ENCODE measurements at regions of chr3 and their contacts with region 1.

Region 1: DNA sequence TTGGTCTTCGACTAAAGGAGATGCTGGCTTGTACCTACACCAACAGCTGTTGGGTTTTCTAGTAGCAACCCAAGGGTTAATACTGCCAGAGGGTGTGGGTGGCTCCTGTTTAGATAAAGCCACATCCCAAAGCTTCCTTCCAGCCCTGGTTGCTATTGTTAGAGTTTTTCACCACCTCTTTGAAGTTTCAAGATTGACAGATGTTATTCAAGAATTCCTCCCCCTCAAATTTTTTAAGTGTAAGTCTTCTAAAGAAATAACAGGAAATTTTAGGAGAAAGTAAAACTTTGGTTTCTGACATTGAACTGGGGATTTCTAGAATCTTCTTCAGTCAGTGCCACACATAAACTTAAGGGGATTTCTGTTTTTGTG is 60.9 kb downstream of the TGFBR2 start:
- DNase-seq: peak in 6 of 9 donors; percentile 60 to 71 (median 66)
- ATAC-seq: peak; percentile 59
- H3K4me3 ChIP-seq: no peak overlapping the region
- H3K4me3 Mint-ChIP-seq: peak overlapping the region; percentile 16 to 88 (median 62)
- H3K27ac ChIP-seq: peak overlapping the region; percentile 72
- H3K27ac Mint-ChIP-seq: peak overlapping the region; percentile 82 to 99 (median 94)
- H3K4me1 ChIP-seq: peaks cover 46 to 95% of the 10 kb centered on the region in 2 donors
- H3K4me1 Mint-ChIP-seq: peaks cover 64 to 100% (median 99%) of the 10 kb centered on the region in 7 donors
- H3K27me3 ChIP-seq: no peaks in the 10 kb centered on the region
- H3K27me3 Mint-ChIP-seq: no peaks in the 10 kb centered on the region

Region 2: DNA sequence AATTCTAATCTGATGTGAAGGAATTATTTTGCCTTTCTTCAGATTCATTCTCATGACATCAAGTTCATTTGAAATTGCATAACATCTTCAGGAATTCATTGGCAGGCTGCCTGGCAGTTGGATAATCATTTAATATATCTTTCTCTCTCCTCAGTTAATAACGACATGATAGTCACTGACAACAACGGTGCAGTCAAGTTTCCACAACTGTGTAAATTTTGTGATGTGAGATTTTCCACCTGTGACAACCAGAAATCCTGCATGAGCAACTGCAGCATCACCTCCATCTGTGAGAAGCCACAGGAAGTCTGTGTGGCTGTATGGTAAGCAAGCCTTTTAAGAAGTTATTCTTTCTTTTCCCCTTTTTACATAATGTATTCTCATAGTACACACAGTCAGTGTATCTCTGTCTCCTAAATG is 22.7 kb before region 1 on chr3:
- CTCF ChIA-PET with region 1: no interaction called
- POLR2A ChIA-PET with region 1: interaction called, 77 read pairs
- intact Hi-C with region 1: loop called in 1 of 2 experiments (anchors 1 kb)
- DNase-seq: peak in 7 of 9 donors; percentile 51 to 83 (median 71)
- ATAC-seq: peak; percentile 77
- H3K4me3 ChIP-seq: peak overlapping the region; percentile 23
- H3K4me3 Mint-ChIP-seq: peak overlapping the region; percentile 60 to 88 (median 77)
- H3K27ac ChIP-seq: peak overlapping the region; percentile 69
- H3K27ac Mint-ChIP-seq: peak overlapping the region; percentile 91 to 98 (median 95)
- H3K4me1 ChIP-seq: peaks cover 88 to 98% of the 10 kb centered on the region in 2 donors
- H3K4me1 Mint-ChIP-seq: peaks cover 80 to 99% (median 94%) of the 10 kb centered on the region in 7 donors
- H3K27me3 ChIP-seq: no peaks in the 10 kb centered on the region
- H3K27me3 Mint-ChIP-seq: no peaks in the 10 kb centered on the region

Region 3: DNA sequence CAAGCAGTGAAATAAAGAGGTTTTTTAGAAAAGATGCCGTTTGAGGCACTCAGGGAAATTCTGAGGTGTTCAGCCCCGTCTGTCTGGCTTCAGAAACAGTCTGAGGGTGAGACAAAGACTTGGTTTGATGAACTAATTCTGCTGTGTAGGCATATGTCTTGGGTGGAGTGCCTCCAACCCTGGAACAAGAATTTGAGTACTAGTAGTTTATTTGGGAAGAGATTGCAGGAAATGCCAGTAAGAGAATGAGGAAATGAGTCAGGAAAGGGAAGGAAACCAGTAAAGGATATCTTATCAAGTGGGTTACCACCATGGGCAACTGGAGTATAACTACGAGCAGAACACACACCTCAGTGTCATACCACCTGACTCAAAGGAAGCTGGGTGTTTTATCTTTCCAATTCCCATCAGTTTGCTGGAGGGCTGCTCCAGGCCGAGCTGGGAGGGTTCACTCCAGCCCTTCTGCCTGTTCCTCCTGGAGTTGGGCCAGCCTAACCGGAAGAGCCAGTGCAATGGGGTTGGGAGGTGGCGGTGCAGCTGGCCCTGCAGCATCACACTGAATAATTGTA is 14.5 kb after region 1 on chr3:
- CTCF ChIA-PET with region 1: interaction called, 5 read pairs
- POLR2A ChIA-PET with region 1: interaction called, 34 read pairs
- intact Hi-C with region 1: loop called (anchors 1 to 2 kb)
- DNase-seq: peak in 2 of 9 donors; percentile 25 to 26
- ATAC-seq: peak; percentile 51
- H3K4me3 ChIP-seq: no peak overlapping the region
- H3K4me3 Mint-ChIP-seq: peak overlapping the region; percentile 39 to 88 (median 78)
- H3K27ac ChIP-seq: peak overlapping the region; percentile 52
- H3K27ac Mint-ChIP-seq: peak overlapping the region; percentile 62 to 98 (median 93)
- H3K4me1 ChIP-seq: peaks cover 32 to 84% of the 10 kb centered on the region in 2 donors
- H3K4me1 Mint-ChIP-seq: peaks cover 61 to 100% (median 93%) of the 10 kb centered on the region in 7 donors
- H3K27me3 ChIP-seq: no peaks in the 10 kb centered on the region
- H3K27me3 Mint-ChIP-seq: no peaks in the 10 kb centered on the region

Region 4: DNA sequence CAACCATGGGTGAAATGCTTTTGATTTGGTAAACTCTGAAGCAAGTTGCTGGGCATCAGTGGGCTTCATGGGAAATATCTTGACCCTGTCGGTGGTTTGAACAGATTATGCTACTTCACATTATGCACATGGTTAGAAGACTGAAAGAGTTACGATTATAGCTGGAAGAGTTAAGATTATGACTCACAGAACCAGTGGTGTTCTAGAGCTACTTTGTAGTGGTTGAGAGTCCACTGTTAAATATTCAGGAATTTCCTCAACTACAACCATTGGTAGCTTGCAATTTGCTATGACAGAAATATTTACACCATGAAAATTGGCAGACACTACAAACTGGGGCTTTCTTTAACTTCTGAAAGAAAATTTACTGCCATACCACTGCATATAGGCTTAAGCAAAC is 127.9 kb after region 1 on chr3:
- CTCF ChIA-PET with region 1: no interaction called
- POLR2A ChIA-PET with region 1: no interaction called
- intact Hi-C with region 1: no loop called
- DNase-seq: no peak
- ATAC-seq: no peak
- H3K4me3 ChIP-seq: no peak overlapping the region
- H3K4me3 Mint-ChIP-seq: no peak overlapping the region
- H3K27ac ChIP-seq: no peak overlapping the region
- H3K27ac Mint-ChIP-seq: no peak overlapping the region
- H3K4me1 ChIP-seq: no peaks in the 10 kb centered on the region
- H3K4me1 Mint-ChIP-seq: peaks cover 0 to 1% (median 0%) of the 10 kb centered on the region in 7 donors
- H3K27me3 ChIP-seq: no peaks in the 10 kb centered on the region
- H3K27me3 Mint-ChIP-seq: peaks cover 0 to 7% (median 3%) of the 10 kb centered on the region in 5 donors

Region 5: DNA sequence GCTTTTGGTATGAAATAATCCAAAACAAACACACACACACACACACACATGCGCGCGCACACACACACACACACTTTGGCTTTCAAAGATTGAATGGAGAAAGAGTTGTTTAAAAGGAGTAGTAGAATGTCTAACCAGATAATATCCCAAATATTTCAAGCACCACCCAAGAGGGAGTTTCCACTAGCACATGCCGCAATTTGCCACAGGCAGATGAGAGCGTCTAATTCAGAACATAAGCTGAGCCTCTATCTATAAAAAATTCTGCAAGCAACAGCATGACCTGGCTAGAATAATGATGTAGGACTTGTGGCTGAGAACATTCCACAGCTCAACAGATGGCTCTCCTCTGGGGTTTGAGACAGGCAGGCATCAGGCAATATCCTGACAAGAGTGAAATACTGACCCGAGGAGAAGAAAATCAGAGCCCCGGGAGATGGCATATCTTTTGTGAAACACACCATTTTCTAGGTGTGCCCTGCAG is 529.7 kb after region 1 on chr3:
- CTCF ChIA-PET with region 1: no interaction called
- POLR2A ChIA-PET with region 1: no interaction called
- intact Hi-C with region 1: no loop called
- DNase-seq: no peak
- ATAC-seq: no peak
- H3K4me3 ChIP-seq: no peak overlapping the region
- H3K4me3 Mint-ChIP-seq: no peak overlapping the region
- H3K27ac ChIP-seq: no peak overlapping the region
- H3K27ac Mint-ChIP-seq: no peak overlapping the region
- H3K4me1 ChIP-seq: no peaks in the 10 kb centered on the region
- H3K4me1 Mint-ChIP-seq: peaks cover 0 to 20% (median 9%) of the 10 kb centered on the region in 7 donors
- H3K27me3 ChIP-seq: no peaks in the 10 kb centered on the region
- H3K27me3 Mint-ChIP-seq: no peaks in the 10 kb centered on the region